Right cardiac atrium (tissue), 5 donors: ENCODE measurements at regions of chr2 and their contacts with region 1.

Region 1: DNA sequence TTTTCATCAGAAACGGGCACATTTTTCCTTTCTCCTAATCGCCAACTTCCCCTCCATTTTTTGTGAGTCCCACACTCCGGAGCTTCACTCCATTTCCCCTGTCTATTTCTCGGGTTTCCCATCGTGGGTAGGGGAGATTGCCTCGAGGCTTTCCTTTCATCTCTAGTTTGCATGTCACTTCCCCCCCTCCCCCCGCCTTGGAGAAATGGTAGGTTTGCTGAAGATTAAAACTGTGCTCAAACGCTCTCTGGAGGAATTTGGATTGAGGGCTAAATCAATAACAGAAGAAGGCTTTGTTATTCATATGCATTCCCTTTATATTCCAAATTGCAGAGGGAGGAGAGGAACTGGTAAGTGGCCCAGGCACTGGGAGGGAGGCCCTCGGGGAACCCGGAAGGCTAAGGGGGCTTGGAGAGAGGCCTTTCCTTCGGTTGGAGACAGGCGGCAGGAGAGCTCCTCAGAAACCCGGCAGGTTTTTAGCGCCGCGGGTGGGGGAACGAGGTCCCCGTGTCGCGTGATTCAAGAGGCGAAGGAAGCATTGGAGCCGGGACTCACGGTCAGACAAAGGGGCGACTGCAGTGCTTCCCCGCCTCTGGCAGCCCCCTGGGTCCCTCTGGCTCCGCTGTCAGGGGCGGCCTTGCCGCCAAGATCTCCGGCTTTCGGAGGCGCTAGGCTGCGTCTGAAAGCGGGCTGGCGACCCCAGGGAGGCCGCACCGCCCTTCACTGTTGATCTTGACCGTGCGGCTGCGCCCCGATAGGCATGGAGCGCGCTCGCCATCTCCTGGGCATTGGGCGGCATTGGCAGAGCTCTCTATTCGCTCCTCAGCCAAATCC is 2.4 kb upstream of the HOXD12 start:
- DNase-seq: peak; percentile 56 to 86 (median 78)
- ATAC-seq: peak; percentile 83 to 92
- H3K4me3 ChIP-seq: peak overlapping the region; percentile 26
- H3K27ac ChIP-seq: no peak overlapping the region
- H3K4me1 ChIP-seq: peaks cover 5% of the 10 kb centered on the region
- H3K27me3 ChIP-seq: peaks cover 3% of the 10 kb centered on the region

Region 2: GRCh38 chr2:175372704-175373701 is 724.2 kb before region 1 on chr2:
- intact Hi-C with region 1: loop called in 1 of 4 experiments (anchors 5 kb)
- DNase-seq: no peak
- ATAC-seq: no peak
- H3K4me3 ChIP-seq: no peak overlapping the region
- H3K27ac ChIP-seq: no peak overlapping the region
- H3K4me1 ChIP-seq: no peaks in the 10 kb centered on the region
- H3K27me3 ChIP-seq: peaks cover 2% of the 10 kb centered on the region

Region 3: GRCh38 chr2:175414882-175415487 is 682.2 kb before region 1 on chr2:
- intact Hi-C with region 1: loop called in 1 of 4 experiments (anchors 10 kb)
- DNase-seq: peak; percentile 53 to 87 (median 72)
- ATAC-seq: peak; percentile 54 to 69
- H3K4me3 ChIP-seq: no peak overlapping the region
- H3K27ac ChIP-seq: no peak overlapping the region
- H3K4me1 ChIP-seq: no peaks in the 10 kb centered on the region
- H3K27me3 ChIP-seq: no peaks in the 10 kb centered on the region

Region 4: GRCh38 chr2:175684457-175684856 is 412.7 kb before region 1 on chr2:
- intact Hi-C with region 1: loop called in 2 of 4 experiments (anchors 5 to 10 kb)
- DNase-seq: no peak
- ATAC-seq: no peak
- H3K4me3 ChIP-seq: no peak overlapping the region
- H3K27ac ChIP-seq: no peak overlapping the region
- H3K4me1 ChIP-seq: no peaks in the 10 kb centered on the region
- H3K27me3 ChIP-seq: no peaks in the 10 kb centered on the region

Region 5: GRCh38 chr2:176039375-176039774 is 57.8 kb before region 1 on chr2:
- intact Hi-C with region 1: no loop called
- DNase-seq: no peak
- ATAC-seq: no peak
- H3K4me3 ChIP-seq: no peak overlapping the region
- H3K27ac ChIP-seq: no peak overlapping the region
- H3K4me1 ChIP-seq: no peaks in the 10 kb centered on the region
- H3K27me3 ChIP-seq: no peaks in the 10 kb centered on the region

Region 6: DNA sequence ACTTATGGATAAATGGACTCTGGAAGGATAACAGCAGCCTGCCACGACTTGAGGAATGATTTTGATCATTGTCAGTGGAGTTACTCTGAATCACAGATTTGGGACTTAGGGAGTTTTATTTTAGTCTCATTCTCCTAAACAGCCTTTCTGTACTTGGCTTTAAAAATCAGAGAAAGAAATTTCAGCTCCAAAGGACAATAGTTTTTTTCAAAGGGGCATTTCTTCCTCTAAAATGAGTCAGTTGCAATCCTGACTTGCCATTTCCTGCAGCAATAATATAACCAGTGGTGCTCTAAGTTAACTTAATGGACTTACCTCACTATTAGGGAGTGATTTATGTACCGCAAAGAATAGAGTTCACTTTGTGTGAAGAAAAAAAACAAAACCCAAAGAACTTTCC is 137.0 kb after region 1 on chr2:
- intact Hi-C with region 1: no loop called
- DNase-seq: no peak
- ATAC-seq: no peak
- H3K4me3 ChIP-seq: no peak overlapping the region
- H3K27ac ChIP-seq: no peak overlapping the region
- H3K4me1 ChIP-seq: no peaks in the 10 kb centered on the region
- H3K27me3 ChIP-seq: peaks cover 8% of the 10 kb centered on the region